K562 (cell line): ENCODE measurements at regions of chrX and their contacts with region 1.

Region 1: GRCh38 chrX:10189317-10190268 is 32.8 kb downstream of the CLCN4 start:
- DNase-seq: peak; percentile 66 to 80 (median 71)
- ATAC-seq: peak; percentile 97
- H3K4me3 ChIP-seq: no peak overlapping the region
- H3K27ac ChIP-seq: no peak overlapping the region
- H3K4me1 ChIP-seq: no peaks in the 10 kb centered on the region; a peak in 2 of 5 replicates
- H3K27me3 ChIP-seq: peaks cover 0 to 1% of the 10 kb centered on the region in 2 experiments; a peak in 2 of 5 replicates
- CTCF ChIP-seq: peak; percentile 76 to 77 (median 76)
- EP300 ChIP-seq: no peak
- POLR2A ChIP-seq: no peak
- RAD21 ChIP-seq: peak; percentile 71 to 81

Region 2: GRCh38 chrX:10326578-10326977 is 137.0 kb after region 1 on chrX:
- CTCF ChIA-PET with region 1: no interaction called
- POLR2A ChIA-PET with region 1: no interaction called
- in situ Hi-C with region 1: no loop called
- intact Hi-C with region 1: loop called (anchors 1 kb)
- DNase-seq: peak in 1 of 4 experiments; percentile 2
- ATAC-seq: peak; percentile 69
- H3K4me3 ChIP-seq: no peak overlapping the region
- H3K27ac ChIP-seq: no peak overlapping the region
- H3K4me1 ChIP-seq: no peaks in the 10 kb centered on the region; a peak in 1 of 5 replicates
- H3K27me3 ChIP-seq: no peaks in the 10 kb centered on the region
- CTCF ChIP-seq: peak; percentile 25 to 35 (median 30); a peak in 5 of 6 replicates
- EP300 ChIP-seq: no peak
- POLR2A ChIP-seq: no peak
- RAD21 ChIP-seq: peak; percentile 33 to 43

Region 3: DNA sequence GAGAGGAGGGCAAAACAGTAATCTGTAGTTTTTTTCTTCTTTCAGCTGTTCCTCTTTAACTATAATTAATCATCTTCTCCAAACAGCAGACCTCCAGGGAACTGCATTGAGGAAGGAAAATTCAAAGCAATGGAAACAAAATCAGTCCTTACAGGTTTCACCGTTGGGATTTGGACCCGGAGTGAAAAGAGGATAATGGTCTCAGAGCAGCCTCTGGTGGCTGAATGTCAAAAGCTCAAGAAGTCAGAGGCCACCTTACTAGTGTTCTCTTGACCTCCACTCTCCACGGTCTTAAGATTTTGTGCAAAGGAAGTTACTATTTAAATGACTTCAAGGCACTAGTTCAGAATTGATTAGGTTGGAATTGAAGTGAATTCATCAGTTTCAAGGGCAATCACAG is 446.7 kb after region 1 on chrX:
- CTCF ChIA-PET with region 1: interaction called, 10 read pairs
- POLR2A ChIA-PET with region 1: no interaction called
- in situ Hi-C with region 1: no loop called
- intact Hi-C with region 1: loop called (anchors 2 kb)
- DNase-seq: peak; percentile 6 to 16 (median 10)
- ATAC-seq: 0 out of 3 replicates have a peak, but pooled peaks have one; percentile 35
- H3K4me3 ChIP-seq: no peak overlapping the region
- H3K27ac ChIP-seq: no peak overlapping the region
- H3K4me1 ChIP-seq: no peaks in the 10 kb centered on the region
- H3K27me3 ChIP-seq: no peaks in the 10 kb centered on the region
- CTCF ChIP-seq: peak; percentile 48 to 60 (median 52)
- EP300 ChIP-seq: no peak
- POLR2A ChIP-seq: no peak
- RAD21 ChIP-seq: peak; percentile 57 to 60

Region 4: DNA sequence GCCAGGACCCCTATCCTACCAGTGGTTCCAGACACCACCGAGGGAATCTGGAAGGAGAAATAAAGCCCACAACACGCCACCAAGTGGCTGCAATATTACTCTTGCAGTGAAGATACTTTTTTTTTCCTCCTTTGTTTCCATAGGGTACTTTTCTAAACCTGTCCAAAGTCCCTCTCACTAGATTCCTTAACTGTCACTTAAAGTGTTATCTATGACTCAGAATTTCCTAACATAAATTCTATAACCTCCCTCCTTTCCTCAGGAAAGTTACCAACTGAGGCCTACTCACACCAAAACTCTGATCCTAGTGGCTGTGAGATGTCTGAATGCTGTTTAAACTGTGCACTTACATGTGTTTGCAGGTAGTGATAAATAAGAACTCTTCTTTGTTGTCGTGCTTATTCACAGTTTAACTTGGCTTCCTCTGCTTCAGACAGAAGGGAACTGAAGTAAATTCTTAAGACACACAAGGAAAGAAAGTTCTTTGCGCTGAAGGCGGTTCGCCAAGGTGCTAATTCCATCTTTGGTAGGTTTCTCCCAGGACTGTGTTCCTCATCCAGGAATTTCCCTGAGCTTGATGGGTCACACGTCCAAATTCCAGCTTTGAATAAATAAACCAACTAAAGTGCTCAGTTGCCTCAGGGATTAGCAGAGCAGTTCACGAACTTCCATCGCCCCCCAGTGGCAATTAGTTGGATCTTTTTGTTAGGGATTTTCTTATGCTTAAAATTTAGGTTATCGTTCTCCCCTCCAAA is 910.9 kb after region 1 on chrX:
- CTCF ChIA-PET with region 1: no interaction called
- POLR2A ChIA-PET with region 1: no interaction called
- in situ Hi-C with region 1: no loop called
- intact Hi-C with region 1: loop called (anchors 10 kb)
- DNase-seq: peak in 3 of 4 experiments; percentile 12 to 37 (median 28)
- ATAC-seq: peak; percentile 76
- H3K4me3 ChIP-seq: no peak overlapping the region
- H3K27ac ChIP-seq: no peak overlapping the region
- H3K4me1 ChIP-seq: peaks cover 0 to 2% of the 10 kb centered on the region in 2 experiments; a peak in 1 of 5 replicates
- H3K27me3 ChIP-seq: no peaks in the 10 kb centered on the region
- CTCF ChIP-seq: peak; percentile 47 to 60 (median 48); a peak in 5 of 6 replicates
- EP300 ChIP-seq: no peak
- POLR2A ChIP-seq: no peak
- RAD21 ChIP-seq: peak; percentile 34 to 63; a peak in 3 of 4 replicates

Region 5: DNA sequence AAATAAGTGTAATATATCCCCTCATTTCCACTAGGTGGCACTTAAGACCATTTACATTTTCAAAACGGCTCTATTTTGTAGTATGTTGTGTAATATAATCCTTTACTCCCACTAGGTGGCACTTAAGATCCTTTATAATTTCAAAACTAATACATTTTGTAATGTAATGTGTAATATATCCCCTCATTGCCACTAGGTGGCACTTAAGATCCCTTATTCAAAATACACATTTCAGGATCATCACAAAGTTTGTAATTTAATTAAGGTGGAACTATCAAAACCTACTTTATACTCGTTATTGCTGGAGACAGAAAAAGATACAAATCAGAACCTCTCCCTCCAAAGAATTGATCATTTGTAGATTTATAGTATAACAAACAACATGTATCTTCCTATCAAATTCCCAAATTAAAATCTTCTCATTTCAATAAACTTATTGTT is 1343.6 kb after region 1 on chrX:
- CTCF ChIA-PET with region 1: interaction called, 5 read pairs
- POLR2A ChIA-PET with region 1: no interaction called
- in situ Hi-C with region 1: loop called (anchors 25 kb)
- intact Hi-C with region 1: loop called (anchors 2 kb)
- DNase-seq: peak; percentile 56 to 76 (median 62)
- ATAC-seq: peak; percentile 81
- H3K4me3 ChIP-seq: no peak overlapping the region
- H3K27ac ChIP-seq: no peak overlapping the region
- H3K4me1 ChIP-seq: peaks cover 0 to 18% of the 10 kb centered on the region in 2 experiments; a peak in 2 of 5 replicates
- H3K27me3 ChIP-seq: no peaks in the 10 kb centered on the region
- CTCF ChIP-seq: peak; percentile 58 to 100 (median 98)
- EP300 ChIP-seq: no peak
- POLR2A ChIP-seq: no peak
- RAD21 ChIP-seq: peak; percentile 98